PC-9 (cell line): ENCODE measurements at regions of chr12 and their contacts with region 1.

Region 1: GRCh38 chr12:105141320-105141918 is 33.9 kb downstream of the WASHC4 start:
- DNase-seq: no peak
- H3K4me3 ChIP-seq: no peak overlapping the region
- H3K27ac ChIP-seq: no peak overlapping the region
- H3K4me1 ChIP-seq: no peaks in the 10 kb centered on the region
- H3K27me3 ChIP-seq: no peaks in the 10 kb centered on the region
- CTCF ChIP-seq: no peak

Region 2: GRCh38 chr12:103947871-103948555 is 1193.4 kb before region 1 on chr12:
- CTCF ChIA-PET with region 1: no interaction called
- POLR2A ChIA-PET with region 1: no interaction called
- intact Hi-C with region 1: loop called (anchors 10 kb)
- DNase-seq: peak in 1 of 2 experiments; percentile 22
- H3K4me3 ChIP-seq: no peak overlapping the region
- H3K27ac ChIP-seq: no peak overlapping the region; the same call in 1 of the 2 replicates
- H3K4me1 ChIP-seq: no peaks in the 10 kb centered on the region
- H3K27me3 ChIP-seq: no peaks in the 10 kb centered on the region
- CTCF ChIP-seq: no peak

Region 3: GRCh38 chr12:104903648-104904423 is 237.6 kb before region 1 on chr12:
- CTCF ChIA-PET with region 1: no interaction called
- POLR2A ChIA-PET with region 1: no interaction called
- intact Hi-C with region 1: no loop called
- DNase-seq: no peak
- H3K4me3 ChIP-seq: no peak overlapping the region
- H3K27ac ChIP-seq: no peak overlapping the region
- H3K4me1 ChIP-seq: no peaks in the 10 kb centered on the region
- H3K27me3 ChIP-seq: no peaks in the 10 kb centered on the region
- CTCF ChIP-seq: no peak